ENCODE measurements at regions of chr19 and their contacts with region 1.

Region 1: DNA sequence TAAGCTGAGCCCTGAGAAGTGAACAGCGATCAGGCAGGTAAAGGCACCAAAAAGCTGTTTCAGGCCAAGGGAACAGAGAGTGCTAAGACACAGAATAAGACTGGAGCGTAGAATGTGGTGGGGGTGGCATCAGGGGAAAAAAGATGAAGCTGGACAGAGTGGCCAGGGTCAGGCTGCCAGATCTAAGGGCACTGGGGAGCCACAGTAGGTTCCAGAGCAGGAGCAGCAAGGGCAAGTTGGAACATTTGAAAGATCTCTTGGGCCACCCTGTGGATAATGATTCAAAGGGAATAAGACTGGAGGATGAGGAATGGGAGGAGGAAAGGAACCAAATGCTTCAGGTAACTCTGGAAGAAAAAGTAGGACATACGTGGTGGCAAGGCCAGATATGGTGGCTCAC is 6.5 kb upstream of the PLIN3 start:
- DNase-seq: no peak
- H3K4me3 Mint-ChIP-seq: no peak overlapping the region
- H3K27ac Mint-ChIP-seq: no peak overlapping the region
- H3K4me1 Mint-ChIP-seq: peaks cover 10% of the 10 kb centered on the region
- H3K27me3 Mint-ChIP-seq: no peaks in the 10 kb centered on the region
- CTCF ChIP-seq: no peak

Region 2: GRCh38 chr19:4164262-4164661 is 709.7 kb before region 1 on chr19:
- CTCF ChIA-PET with region 1: no interaction called
- POLR2A ChIA-PET with region 1: no interaction called
- intact Hi-C with region 1: no loop called
- DNase-seq: no peak
- H3K4me3 Mint-ChIP-seq: no peak overlapping the region
- H3K27ac Mint-ChIP-seq: no peak overlapping the region
- H3K4me1 Mint-ChIP-seq: no peaks in the 10 kb centered on the region
- H3K27me3 Mint-ChIP-seq: peaks cover 29% of the 10 kb centered on the region
- CTCF ChIP-seq: no peak

Region 3: GRCh38 chr19:4844348-4845179 is 29.4 kb before region 1 on chr19:
- CTCF ChIA-PET with region 1: no interaction called
- POLR2A ChIA-PET with region 1: no interaction called
- intact Hi-C with region 1: no loop called
- DNase-seq: no peak
- H3K4me3 Mint-ChIP-seq: no peak overlapping the region
- H3K27ac Mint-ChIP-seq: no peak overlapping the region
- H3K4me1 Mint-ChIP-seq: no peaks in the 10 kb centered on the region
- H3K27me3 Mint-ChIP-seq: no peaks in the 10 kb centered on the region
- CTCF ChIP-seq: no peak

Region 4: DNA sequence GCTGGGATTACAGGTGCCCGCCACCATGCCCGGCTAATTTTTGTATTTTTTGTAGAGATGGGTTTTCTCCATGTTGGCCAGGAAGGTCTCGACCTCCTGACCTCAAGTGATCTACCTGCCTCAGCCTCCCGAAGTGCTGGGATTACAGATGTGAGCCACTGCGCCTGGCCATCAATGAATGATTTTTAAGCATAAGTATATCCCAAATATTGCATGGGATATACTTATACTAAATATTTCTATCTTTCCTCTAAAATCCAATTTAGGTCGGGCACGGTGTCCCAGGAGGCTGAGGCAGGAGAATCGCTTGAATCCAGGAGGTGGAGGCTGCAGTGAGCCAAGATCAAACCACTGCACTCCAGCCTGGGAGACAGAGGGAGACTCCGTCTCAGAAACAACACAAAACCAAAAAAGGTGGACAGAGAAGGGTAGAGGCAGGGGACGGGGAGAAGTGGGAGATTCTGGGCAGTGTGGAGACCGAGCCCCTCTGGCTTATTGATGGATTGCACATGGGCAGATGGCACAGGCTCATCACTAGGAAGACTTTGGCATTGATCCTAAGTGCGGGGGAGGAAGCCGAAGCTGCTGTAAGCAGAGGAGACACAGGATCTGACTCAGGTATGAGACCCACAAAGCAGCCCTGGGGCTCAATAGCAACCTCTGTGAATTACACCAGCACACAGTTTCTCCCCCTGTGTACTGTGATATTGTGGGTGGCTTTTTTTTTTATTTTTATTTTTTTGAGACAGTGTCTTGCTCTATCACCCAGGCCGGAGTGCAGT is 15.3 kb after region 1 on chr19:
- CTCF ChIA-PET with region 1: interaction called, 4 read pairs
- POLR2A ChIA-PET with region 1: interaction called, 4 read pairs
- intact Hi-C with region 1: loop called (anchors 2 kb)
- DNase-seq: peak; percentile 99
- H3K4me3 Mint-ChIP-seq: no peak overlapping the region
- H3K27ac Mint-ChIP-seq: no peak overlapping the region
- H3K4me1 Mint-ChIP-seq: peaks cover 6% of the 10 kb centered on the region
- H3K27me3 Mint-ChIP-seq: no peaks in the 10 kb centered on the region
- CTCF ChIP-seq: no peak

Region 5: GRCh38 chr19:5031231-5032100 is 157.5 kb after region 1 on chr19:
- CTCF ChIA-PET with region 1: interaction called, 7 read pairs
- POLR2A ChIA-PET with region 1: interaction called, 3 read pairs
- intact Hi-C with region 1: loop called (anchors 1 kb)
- DNase-seq: peak; percentile 82
- H3K4me3 Mint-ChIP-seq: no peak overlapping the region
- H3K27ac Mint-ChIP-seq: no peak overlapping the region
- H3K4me1 Mint-ChIP-seq: no peaks in the 10 kb centered on the region
- H3K27me3 Mint-ChIP-seq: no peaks in the 10 kb centered on the region
- CTCF ChIP-seq: peak; percentile 95